PC-9 (cell line): ENCODE measurements at regions of chr1 and their contacts with region 1.

Region 1: GRCh38 chr1:234772345-234773147 is 162.6 kb upstream of the IRF2BP2 start:
- DNase-seq: peak; percentile 95 to 99
- H3K4me3 ChIP-seq: peak overlapping the region; percentile 35; the same call in 1 of the 2 replicates
- H3K27ac ChIP-seq: peak overlapping the region; percentile 95
- H3K4me1 ChIP-seq: peaks cover 22% of the 10 kb centered on the region
- H3K27me3 ChIP-seq: no peaks in the 10 kb centered on the region
- CTCF ChIP-seq: no peak

Region 2: GRCh38 chr1:233897325-233898162 is 875.0 kb before region 1 on chr1:
- CTCF ChIA-PET with region 1: no interaction called
- POLR2A ChIA-PET with region 1: no interaction called
- intact Hi-C with region 1: no loop called
- DNase-seq: no peak
- H3K4me3 ChIP-seq: no peak overlapping the region
- H3K27ac ChIP-seq: no peak overlapping the region
- H3K4me1 ChIP-seq: no peaks in the 10 kb centered on the region
- H3K27me3 ChIP-seq: no peaks in the 10 kb centered on the region
- CTCF ChIP-seq: no peak

Region 3: DNA sequence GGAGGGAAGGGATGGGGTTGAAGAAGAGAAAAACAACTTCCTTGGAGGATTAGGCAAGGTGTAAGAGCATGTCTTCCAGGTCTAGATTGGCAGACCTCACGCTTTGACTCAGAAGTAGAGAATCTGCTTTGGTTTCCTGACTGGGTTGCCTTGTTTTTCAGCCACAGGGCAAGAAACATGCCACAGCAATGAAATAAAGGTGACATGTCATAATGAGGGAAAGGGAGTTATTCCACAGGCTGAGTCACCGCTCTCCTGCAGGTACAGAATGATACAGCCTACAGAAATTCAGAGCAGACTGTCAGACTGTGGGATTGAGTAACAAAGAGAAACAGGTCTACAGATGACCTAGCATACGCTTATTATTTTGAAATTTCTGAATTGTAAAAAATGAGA is 207.9 kb before region 1 on chr1:
- CTCF ChIA-PET with region 1: no interaction called
- POLR2A ChIA-PET with region 1: no interaction called
- intact Hi-C with region 1: loop called (anchors 1 kb)
- DNase-seq: peak; percentile 88 to 99
- H3K4me3 ChIP-seq: no peak overlapping the region
- H3K27ac ChIP-seq: peak overlapping the region; percentile 90
- H3K4me1 ChIP-seq: peaks cover 45% of the 10 kb centered on the region
- H3K27me3 ChIP-seq: no peaks in the 10 kb centered on the region
- CTCF ChIP-seq: no peak

Region 4: GRCh38 chr1:234745844-234746797 is 26.4 kb before region 1 on chr1:
- CTCF ChIA-PET with region 1: no interaction called
- POLR2A ChIA-PET with region 1: no interaction called
- intact Hi-C with region 1: loop called (anchors 1 kb)
- DNase-seq: peak in 1 of 2 experiments; percentile 79
- H3K4me3 ChIP-seq: no peak overlapping the region
- H3K27ac ChIP-seq: peak overlapping the region; percentile 82
- H3K4me1 ChIP-seq: peaks cover 45% of the 10 kb centered on the region
- H3K27me3 ChIP-seq: no peaks in the 10 kb centered on the region
- CTCF ChIP-seq: no peak

Region 5: DNA sequence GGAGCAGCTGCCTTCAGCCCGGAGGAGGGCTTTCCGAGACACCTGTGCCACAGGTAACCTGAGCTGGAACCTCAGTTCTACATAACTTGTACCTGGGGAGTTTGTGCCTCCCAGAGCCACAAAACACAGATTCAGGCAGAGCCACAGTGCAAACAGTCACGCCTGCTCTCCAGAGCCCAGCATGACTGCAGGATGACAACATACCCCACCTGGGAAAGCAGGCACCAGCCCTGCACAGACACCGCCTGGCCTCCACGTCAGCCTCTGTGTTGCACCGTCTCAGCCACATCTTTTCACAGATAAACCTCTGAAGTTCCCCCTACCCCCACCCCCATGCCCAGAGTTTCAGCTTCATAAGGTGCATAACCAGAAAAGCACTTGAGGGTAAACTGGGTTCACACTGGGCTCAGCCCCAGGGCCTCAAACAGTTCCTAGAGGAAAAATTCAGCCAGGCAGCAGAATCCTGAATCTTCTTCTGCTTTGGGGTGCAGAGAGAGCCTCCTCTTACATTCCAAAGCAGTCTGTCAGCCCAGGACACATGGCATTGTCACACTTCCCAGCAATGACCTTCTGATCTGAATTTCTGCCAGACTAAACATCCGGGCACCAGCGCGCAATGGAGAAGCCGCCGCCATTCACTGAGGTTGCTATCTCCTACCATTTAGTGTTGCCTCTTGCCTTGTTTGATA is 126.6 kb after region 1 on chr1:
- CTCF ChIA-PET with region 1: no interaction called
- POLR2A ChIA-PET with region 1: no interaction called
- intact Hi-C with region 1: loop called (anchors 1 kb)
- DNase-seq: peak; percentile 82
- H3K4me3 ChIP-seq: no peak overlapping the region
- H3K27ac ChIP-seq: peak overlapping the region; percentile 59
- H3K4me1 ChIP-seq: peaks cover 67% of the 10 kb centered on the region
- H3K27me3 ChIP-seq: no peaks in the 10 kb centered on the region
- CTCF ChIP-seq: no peak

Region 6: GRCh38 chr1:234978397-234979295 is 206.1 kb after region 1 on chr1:
- CTCF ChIA-PET with region 1: no interaction called
- POLR2A ChIA-PET with region 1: no interaction called
- intact Hi-C with region 1: loop called (anchors 2 kb)
- DNase-seq: peak; percentile 45 to 93
- H3K4me3 ChIP-seq: peak overlapping the region; percentile 30; the same call in 1 of the 2 replicates
- H3K27ac ChIP-seq: peak overlapping the region; percentile 99
- H3K4me1 ChIP-seq: peaks cover 99% of the 10 kb centered on the region
- H3K27me3 ChIP-seq: no peaks in the 10 kb centered on the region
- CTCF ChIP-seq: no peak

Region 7: DNA sequence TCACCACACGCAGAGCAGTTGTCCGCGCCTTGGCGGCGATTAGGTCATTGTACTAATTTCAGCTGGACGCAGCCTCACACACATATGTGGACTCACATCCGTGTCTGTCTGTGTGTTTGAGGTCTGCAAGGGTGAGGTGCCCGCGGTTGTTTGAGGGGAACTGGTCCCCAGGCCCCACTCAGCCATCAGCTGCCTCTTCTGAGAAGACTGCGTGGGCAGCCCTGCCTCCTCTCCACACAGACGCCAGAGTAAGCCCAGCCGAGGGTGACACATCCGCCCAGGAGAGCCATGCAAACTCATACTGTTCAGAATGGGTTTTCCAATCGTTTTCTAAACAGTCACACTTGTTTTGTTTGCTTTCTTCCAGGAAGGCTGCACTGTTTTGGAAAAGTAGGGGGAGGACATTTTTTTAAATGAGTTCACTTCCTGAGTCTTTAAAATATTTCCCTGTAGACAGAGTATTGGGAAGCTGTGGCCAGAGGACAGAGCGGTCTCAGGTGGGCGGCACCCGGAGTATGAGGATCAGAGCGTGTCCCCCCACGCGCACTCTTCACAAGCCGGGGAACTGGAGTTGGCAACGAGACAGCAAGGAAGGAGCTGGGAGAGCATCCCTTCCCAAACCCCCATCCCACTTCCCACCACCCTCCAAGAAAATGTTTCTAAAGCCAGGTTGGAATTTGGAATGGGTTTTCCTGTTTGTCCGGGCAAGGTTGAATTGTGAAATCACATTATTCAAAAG is 302.8 kb after region 1 on chr1:
- CTCF ChIA-PET with region 1: no interaction called
- POLR2A ChIA-PET with region 1: no interaction called
- intact Hi-C with region 1: loop called (anchors 2 kb)
- DNase-seq: peak; percentile 66 to 95
- H3K4me3 ChIP-seq: peak overlapping the region; percentile 61
- H3K27ac ChIP-seq: peak overlapping the region; percentile 100
- H3K4me1 ChIP-seq: peaks cover 94% of the 10 kb centered on the region
- H3K27me3 ChIP-seq: no peaks in the 10 kb centered on the region
- CTCF ChIP-seq: no peak